ENCODE measurements at regions of chr7 and their contacts with region 1.

Region 1: DNA sequence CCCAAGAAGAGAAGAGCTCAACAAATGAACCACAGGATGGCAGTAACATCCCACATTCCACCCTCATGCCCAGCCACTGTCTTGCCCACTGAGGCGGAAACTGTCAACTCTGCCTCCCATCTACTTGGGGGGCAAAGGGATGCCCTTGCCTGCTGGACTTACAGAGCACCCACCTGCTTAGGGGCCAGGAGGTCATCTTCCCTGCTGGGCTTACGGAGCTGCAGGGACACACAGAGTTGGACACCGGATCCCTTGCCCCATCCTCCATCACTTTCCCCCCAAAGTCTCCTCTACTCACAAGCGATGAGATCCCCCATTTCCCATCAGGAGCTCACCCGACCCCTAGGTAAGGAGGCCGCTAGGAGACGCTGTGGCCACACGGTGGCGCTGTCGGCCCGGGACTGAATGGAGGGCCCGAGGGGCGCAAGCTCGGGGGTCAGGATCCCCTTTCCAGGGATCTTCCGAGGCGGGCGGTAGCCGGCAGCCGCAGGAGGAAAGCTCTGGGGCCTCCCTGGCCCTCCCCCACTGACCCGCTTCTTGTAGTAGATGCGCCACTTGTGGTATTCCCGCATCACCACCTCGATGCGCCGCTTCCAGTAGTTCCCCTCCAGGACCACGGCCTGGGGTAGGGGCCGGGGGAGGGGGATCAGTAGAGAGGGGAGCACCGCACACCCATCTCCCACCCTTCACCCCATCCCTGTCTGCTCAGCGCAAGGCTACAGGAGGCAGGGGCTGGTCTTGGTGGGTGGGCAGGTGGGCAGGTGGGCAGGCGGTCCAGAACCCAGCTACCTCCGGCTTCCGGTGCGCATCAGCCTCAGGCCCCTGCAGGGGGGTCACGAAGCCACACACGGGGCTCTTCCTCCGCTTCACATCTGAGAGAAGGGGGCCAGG is 17.3 kb downstream of the MLXIPL start:
- DNase-seq: no peak
- ATAC-seq: peak; percentile 94
- H3K4me3 ChIP-seq: no peak overlapping the region
- H3K27ac ChIP-seq: no peak overlapping the region
- H3K4me1 ChIP-seq: no peaks in the 10 kb centered on the region
- H3K27me3 ChIP-seq: no peaks in the 10 kb centered on the region; a peak in 1 of 4 replicates
- CTCF ChIP-seq: peak; percentile 82 to 94 (median 85)
- EP300 ChIP-seq: no peak
- POLR2A ChIP-seq: no peak
- RAD21 ChIP-seq: peak; percentile 91

Region 2: DNA sequence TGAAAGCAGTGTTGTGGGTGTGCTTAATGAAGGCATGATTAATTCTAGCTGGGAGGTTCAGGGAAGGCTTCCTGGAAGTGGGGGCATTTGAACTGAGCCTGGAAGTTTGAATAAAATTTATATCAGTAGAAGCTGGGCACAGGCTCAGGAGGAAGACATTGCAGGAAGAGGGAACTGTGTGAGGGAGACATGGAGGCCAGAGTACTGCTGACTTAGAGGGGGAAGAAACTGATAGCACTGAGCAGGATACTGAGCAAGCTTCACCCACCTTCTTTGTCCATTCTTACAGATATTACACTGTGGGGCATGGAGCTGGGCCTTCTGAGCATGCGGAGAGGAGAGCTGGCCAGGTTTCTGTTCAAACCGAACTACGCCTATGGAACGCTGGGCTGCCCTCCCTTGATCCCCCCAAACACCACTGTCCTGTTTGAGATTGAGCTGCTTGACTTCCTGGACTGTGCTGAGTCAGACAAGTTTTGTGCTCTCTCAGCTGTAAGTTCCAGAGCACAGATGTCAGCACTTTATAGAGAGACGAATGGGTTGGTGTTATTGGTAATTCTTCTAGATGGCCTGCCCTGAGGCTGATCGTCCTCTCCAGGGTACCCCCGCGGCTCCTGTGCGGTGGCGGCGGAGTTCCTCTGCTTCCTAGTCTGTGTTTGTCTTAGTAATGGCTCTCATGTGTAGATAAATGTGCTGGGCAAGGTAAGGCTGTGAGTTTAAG is 277.0 kb before region 1 on chr7:
- CTCF ChIA-PET with region 1: no interaction called
- POLR2A ChIA-PET with region 1: no interaction called
- RAD21 ChIA-PET with region 1: no interaction called
- SMC1A ChIA-PET with region 1: no interaction called
- in situ Hi-C with region 1: no loop called
- intact Hi-C with region 1: no loop called
- DNase-seq: no peak
- ATAC-seq: no peak
- H3K4me3 ChIP-seq: no peak overlapping the region
- H3K27ac ChIP-seq: no peak overlapping the region
- H3K4me1 ChIP-seq: no peaks in the 10 kb centered on the region
- H3K27me3 ChIP-seq: peaks cover 0 to 3% of the 10 kb centered on the region in 2 experiments; a peak in 2 of 4 replicates
- CTCF ChIP-seq: no peak
- EP300 ChIP-seq: no peak
- POLR2A ChIP-seq: no peak
- RAD21 ChIP-seq: no peak

Region 3: DNA sequence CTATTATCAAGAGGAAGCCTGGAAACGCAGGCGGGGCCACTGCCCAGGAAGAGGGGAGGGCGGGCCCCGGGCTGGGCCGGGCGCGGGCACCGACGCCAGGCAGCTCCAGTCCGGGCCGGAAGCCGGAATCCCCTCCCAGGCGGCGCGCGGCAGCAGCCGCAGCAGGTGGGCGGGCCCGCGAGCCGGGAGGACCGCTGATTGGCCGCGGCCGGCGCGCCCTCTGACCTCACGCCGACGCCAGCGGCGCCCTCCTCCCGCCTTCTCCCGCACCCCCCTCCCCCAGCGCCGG is 50.0 kb before region 1 on chr7:
- CTCF ChIA-PET with region 1: no interaction called
- POLR2A ChIA-PET with region 1: no interaction called
- RAD21 ChIA-PET with region 1: no interaction called
- SMC1A ChIA-PET with region 1: no interaction called
- in situ Hi-C with region 1: no loop called
- intact Hi-C with region 1: no loop called
- DNase-seq: peak; percentile 47
- ATAC-seq: peak; percentile 98
- H3K4me3 ChIP-seq: peak overlapping the region; percentile 98
- H3K27ac ChIP-seq: peak overlapping the region; percentile 97
- H3K4me1 ChIP-seq: peaks cover 18% of the 10 kb centered on the region
- H3K27me3 ChIP-seq: no peaks in the 10 kb centered on the region
- CTCF ChIP-seq: no peak
- EP300 ChIP-seq: no peak
- POLR2A ChIP-seq: no peak
- RAD21 ChIP-seq: no peak

Region 4: GRCh38 chr7:73585196-73585595 is 21.9 kb before region 1 on chr7:
- CTCF ChIA-PET with region 1: interaction called, 14 read pairs
- POLR2A ChIA-PET with region 1: no interaction called
- RAD21 ChIA-PET with region 1: no interaction called
- SMC1A ChIA-PET with region 1: no interaction called
- in situ Hi-C with region 1: no loop called
- intact Hi-C with region 1: no loop called
- DNase-seq: no peak
- ATAC-seq: no peak
- H3K4me3 ChIP-seq: no peak overlapping the region
- H3K27ac ChIP-seq: no peak overlapping the region
- H3K4me1 ChIP-seq: peaks cover 3% of the 10 kb centered on the region
- H3K27me3 ChIP-seq: no peaks in the 10 kb centered on the region
- CTCF ChIP-seq: no peak
- EP300 ChIP-seq: no peak
- POLR2A ChIP-seq: no peak
- RAD21 ChIP-seq: no peak

Region 5: GRCh38 chr7:73652541-73652949 is 45.5 kb after region 1 on chr7:
- CTCF ChIA-PET with region 1: no interaction called
- POLR2A ChIA-PET with region 1: no interaction called
- RAD21 ChIA-PET with region 1: no interaction called
- SMC1A ChIA-PET with region 1: no interaction called
- in situ Hi-C with region 1: no loop called
- intact Hi-C with region 1: no loop called
- DNase-seq: no peak
- ATAC-seq: no peak
- H3K4me3 ChIP-seq: no peak overlapping the region
- H3K27ac ChIP-seq: no peak overlapping the region
- H3K4me1 ChIP-seq: no peaks in the 10 kb centered on the region
- H3K27me3 ChIP-seq: peaks cover 0 to 1% of the 10 kb centered on the region in 2 experiments; a peak in 3 of 4 replicates
- CTCF ChIP-seq: no peak
- EP300 ChIP-seq: no peak
- POLR2A ChIP-seq: no peak
- RAD21 ChIP-seq: no peak

Region 6: DNA sequence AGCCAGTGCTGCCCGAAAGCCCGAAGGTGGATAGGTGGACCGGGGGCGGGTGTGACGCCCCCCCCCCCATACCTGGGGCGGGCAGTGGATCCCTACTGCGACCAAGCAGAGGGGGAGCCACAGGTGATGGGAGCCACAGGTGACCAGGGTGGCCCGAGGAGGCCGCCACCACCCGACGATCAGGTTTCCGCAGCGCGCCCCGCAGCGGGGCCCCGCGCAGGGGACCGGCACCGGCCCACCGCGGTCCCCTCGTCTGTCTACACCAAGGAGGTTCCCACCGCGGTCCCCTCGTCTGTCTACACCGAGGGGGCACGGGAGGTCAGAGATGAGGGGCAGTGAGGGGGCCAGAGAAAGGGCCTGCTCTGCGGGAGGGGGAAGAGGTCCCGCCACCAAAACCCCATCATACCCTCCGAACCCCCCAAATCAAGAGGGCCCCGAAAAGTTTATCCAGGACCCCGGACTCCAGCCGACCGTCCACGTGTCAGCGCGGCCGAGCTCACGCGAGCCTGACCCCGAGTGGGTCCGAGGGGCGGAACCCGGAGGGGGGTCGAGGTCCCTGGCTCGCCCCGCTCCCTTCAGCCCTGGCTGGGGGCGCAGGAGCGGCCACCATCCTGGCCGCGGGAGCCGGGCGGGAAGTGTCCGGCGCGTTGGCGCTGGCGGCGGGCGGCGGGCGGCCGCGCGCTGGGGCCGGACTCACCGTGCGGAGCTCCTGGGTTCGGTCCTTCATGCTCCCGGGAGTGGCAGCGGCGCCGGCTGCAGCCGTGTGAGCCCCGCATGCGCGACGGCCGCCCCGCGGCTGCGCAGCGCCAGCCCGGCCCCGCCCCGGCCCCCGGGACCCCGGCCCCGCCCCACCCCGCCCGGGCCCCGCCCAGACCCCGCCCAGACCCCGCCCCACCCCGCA is 112.1 kb after region 1 on chr7 and contains the start of gene STX1A:
- CTCF ChIA-PET with region 1: interaction called, 15 read pairs
- POLR2A ChIA-PET with region 1: interaction called, 3 read pairs
- RAD21 ChIA-PET with region 1: interaction called, 6 read pairs
- SMC1A ChIA-PET with region 1: interaction called, 17 read pairs
- in situ Hi-C with region 1: no loop called
- intact Hi-C with region 1: no loop called
- DNase-seq: no peak
- ATAC-seq: peak; percentile 86
- H3K4me3 ChIP-seq: peak within 1 kb of the TSS; percentile 87
- H3K27ac ChIP-seq: no peak within 1 kb of the TSS
- H3K4me1 ChIP-seq: peaks cover 12% of the 10 kb centered on the region
- H3K27me3 ChIP-seq: no peaks in the 10 kb centered on the region
- CTCF ChIP-seq: no peak
- EP300 ChIP-seq: no peak
- POLR2A ChIP-seq: peak; percentile 62; the same call in 1 of the 2 replicates
- RAD21 ChIP-seq: no peak
- polyA plus RNA-seq, gene STX1A: 0.15 to 0.21 TPM

Region 7: GRCh38 chr7:73738612-73739374 is 131.7 kb after region 1 on chr7 and contains the start of gene ABHD11:
- CTCF ChIA-PET with region 1: interaction called, 21 read pairs
- POLR2A ChIA-PET with region 1: interaction called, 4 read pairs
- RAD21 ChIA-PET with region 1: interaction called, 13 read pairs
- SMC1A ChIA-PET with region 1: interaction called, 13 read pairs
- in situ Hi-C with region 1: loop called (anchors 5 kb)
- intact Hi-C with region 1: loop called (anchors 2 kb)
- DNase-seq: peak; percentile 90
- ATAC-seq: peak; percentile 89
- H3K4me3 ChIP-seq: peak within 1 kb of the TSS; percentile 92
- H3K27ac ChIP-seq: peak within 1 kb of the TSS; percentile 79
- H3K4me1 ChIP-seq: no peaks in the 10 kb centered on the region; the same call in 1 of the 2 replicates
- H3K27me3 ChIP-seq: no peaks in the 10 kb centered on the region
- CTCF ChIP-seq: no peak
- EP300 ChIP-seq: no peak
- POLR2A ChIP-seq: peak; percentile 92
- RAD21 ChIP-seq: no peak
- polyA plus RNA-seq, gene ABHD11: 2.8 to 5.6 TPM

Region 8: GRCh38 chr7:73858807-73859206 is 251.8 kb after region 1 on chr7:
- CTCF ChIA-PET with region 1: interaction called, 15 read pairs
- POLR2A ChIA-PET with region 1: no interaction called
- RAD21 ChIA-PET with region 1: interaction called, 9 read pairs
- SMC1A ChIA-PET with region 1: no interaction called
- in situ Hi-C with region 1: loop called (anchors 5 kb)
- intact Hi-C with region 1: loop called (anchors 5 kb)
- DNase-seq: no peak
- ATAC-seq: no peak
- H3K4me3 ChIP-seq: no peak overlapping the region
- H3K27ac ChIP-seq: no peak overlapping the region
- H3K4me1 ChIP-seq: peaks cover 5% of the 10 kb centered on the region
- H3K27me3 ChIP-seq: 0 out of 4 replicates have a peak, but pooled peaks cover 0 to 2% of the 10 kb centered on the region in 2 experiments
- CTCF ChIP-seq: no peak
- EP300 ChIP-seq: no peak
- POLR2A ChIP-seq: no peak
- RAD21 ChIP-seq: no peak